Activated B cell treated with CpG ODN at 0.5 μM for 24 hours (primary cell): ENCODE measurements at regions of chr6 and their contacts with region 1.

Region 1: DNA sequence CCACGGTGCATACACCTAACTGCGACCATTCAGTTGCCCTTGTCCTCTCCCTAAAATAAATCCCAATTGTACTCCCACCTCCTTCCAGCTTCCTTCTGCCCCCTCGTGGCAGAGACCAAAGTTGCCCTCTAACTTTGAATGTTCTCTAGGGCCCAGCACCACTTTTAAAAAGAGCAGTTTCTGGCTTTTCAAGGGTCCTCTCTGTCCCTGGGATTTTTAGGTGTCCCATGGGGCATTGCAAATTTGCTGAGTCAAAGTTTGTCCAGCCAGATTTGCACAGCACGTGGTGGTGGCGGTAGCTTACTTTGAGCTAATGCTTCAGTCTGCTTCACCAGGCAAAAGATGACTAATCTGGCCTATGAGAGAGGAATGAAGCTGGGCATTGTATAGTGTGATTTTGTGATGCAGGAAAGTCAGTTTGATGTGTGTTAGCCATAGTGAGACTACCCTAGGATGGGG is 100.2 kb downstream of the PERP start:
- DNase-seq: no peak
- ATAC-seq: no peak
- H3K4me3 Mint-ChIP-seq: no peak overlapping the region
- H3K27ac Mint-ChIP-seq: no peak overlapping the region
- H3K4me1 Mint-ChIP-seq: peaks cover under 1% of the 10 kb centered on the region
- H3K27me3 Mint-ChIP-seq: peaks cover 5% of the 10 kb centered on the region
- CTCF ChIP-seq: no peak

Region 2: GRCh38 chr6:137661601-137662000 is 345.4 kb before region 1 on chr6:
- CTCF ChIA-PET with region 1: interaction called, 20 read pairs
- POLR2A ChIA-PET with region 1: no interaction called
- intact Hi-C with region 1: loop called (anchors 1 kb)
- DNase-seq: no peak
- ATAC-seq: peak; percentile 56
- H3K4me3 Mint-ChIP-seq: no peak overlapping the region
- H3K27ac Mint-ChIP-seq: no peak overlapping the region
- H3K4me1 Mint-ChIP-seq: no peaks in the 10 kb centered on the region
- H3K27me3 Mint-ChIP-seq: peaks cover 7% of the 10 kb centered on the region
- CTCF ChIP-seq: no peak

Region 3: DNA sequence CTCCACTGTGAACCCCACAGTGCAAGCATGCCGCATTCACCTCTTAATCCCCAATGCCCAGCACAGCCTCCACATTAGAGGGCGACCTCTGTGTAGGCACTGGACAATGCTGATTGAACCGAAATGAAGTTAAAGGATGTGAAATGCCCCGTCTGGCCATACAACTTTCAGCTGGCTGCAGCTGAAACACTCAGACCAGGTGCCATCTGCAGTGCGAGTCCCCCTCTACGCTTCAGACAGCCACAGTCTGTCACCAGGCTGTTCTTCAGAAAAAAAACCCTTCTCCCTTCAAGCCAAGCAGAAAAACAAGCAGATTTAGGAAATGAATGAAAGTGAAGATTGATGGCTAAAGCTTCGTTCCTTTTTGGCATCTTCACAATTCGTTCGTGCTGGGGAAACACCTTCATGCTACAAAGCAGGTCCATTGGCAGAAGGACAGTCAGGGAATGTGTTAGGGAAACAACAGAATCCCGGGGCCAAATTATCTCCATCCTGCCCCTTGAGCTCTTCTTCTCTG is 95.3 kb before region 1 on chr6:
- CTCF ChIA-PET with region 1: no interaction called
- POLR2A ChIA-PET with region 1: no interaction called
- intact Hi-C with region 1: no loop called
- DNase-seq: no peak
- ATAC-seq: peak; percentile 32
- H3K4me3 Mint-ChIP-seq: peak overlapping the region; percentile 48
- H3K27ac Mint-ChIP-seq: no peak overlapping the region
- H3K4me1 Mint-ChIP-seq: peaks cover 63% of the 10 kb centered on the region
- H3K27me3 Mint-ChIP-seq: no peaks in the 10 kb centered on the region
- CTCF ChIP-seq: no peak

Region 4: DNA sequence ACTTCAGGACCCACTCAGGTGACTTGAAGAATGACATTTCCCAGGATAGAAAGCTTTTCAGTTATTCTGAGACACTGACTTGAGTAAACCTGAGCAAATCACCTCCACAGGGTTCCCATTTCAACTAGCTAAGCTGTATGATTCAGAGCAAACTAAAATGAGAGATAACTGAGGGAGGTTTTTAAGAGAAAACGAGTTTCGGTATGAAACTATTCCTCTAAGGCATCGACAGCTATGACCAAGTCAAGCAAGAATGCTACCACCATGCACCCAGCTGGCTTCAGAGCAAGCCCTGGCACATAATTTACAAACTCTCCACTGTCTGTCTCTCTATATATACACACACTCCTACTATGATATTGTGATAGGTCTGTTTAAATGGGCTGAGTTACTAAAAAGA is 24.8 kb after region 1 on chr6:
- CTCF ChIA-PET with region 1: no interaction called
- POLR2A ChIA-PET with region 1: no interaction called
- intact Hi-C with region 1: no loop called
- DNase-seq: no peak
- ATAC-seq: no peak
- H3K4me3 Mint-ChIP-seq: no peak overlapping the region
- H3K27ac Mint-ChIP-seq: no peak overlapping the region
- H3K4me1 Mint-ChIP-seq: no peaks in the 10 kb centered on the region
- H3K27me3 Mint-ChIP-seq: peaks cover 6% of the 10 kb centered on the region
- CTCF ChIP-seq: no peak